CD4-positive, alpha-beta T cell (primary cell): ENCODE measurements at regions of chr6 and their contacts with region 1.

Region 1: DNA sequence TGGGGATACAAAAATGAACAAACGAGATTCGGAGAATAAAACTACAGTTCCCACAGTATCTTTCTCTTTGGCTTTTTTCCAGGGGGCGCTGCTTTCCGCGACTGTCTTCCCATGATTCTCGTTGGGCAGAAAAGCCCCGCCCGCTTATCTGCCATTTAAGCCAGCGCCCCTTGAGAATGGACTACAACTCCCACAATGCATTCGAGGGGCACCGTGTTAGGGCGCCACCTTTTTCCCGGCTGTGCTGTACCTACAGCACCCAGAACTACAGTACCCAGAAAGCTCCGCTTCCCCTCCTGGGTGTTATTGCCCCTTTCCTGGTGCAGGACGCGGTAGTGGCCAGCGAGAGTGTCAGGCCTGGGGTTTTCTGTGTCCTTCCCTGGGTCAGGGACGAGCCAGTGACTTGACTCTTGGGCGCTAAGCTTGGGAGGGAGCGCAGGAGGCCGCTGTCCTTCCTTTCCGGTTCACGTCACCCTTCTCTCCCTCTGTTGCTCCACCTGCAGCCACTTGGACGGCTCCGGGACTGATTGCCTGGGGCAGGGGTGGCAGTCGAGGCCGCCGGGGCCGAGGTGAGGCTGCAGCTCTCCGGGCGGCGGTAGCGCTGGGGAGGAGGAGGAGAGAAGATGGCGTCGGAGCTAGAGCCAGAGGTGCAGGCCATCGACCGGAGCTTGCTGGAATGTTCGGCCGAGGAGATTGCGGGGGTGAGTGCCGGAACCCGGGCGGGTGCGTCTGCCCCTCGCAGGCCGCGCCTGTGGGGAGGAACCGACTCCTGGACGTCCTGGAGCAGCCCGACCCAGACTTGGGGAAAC is at the start of gene UBR2:
- DNase-seq: peak; percentile 81 to 98 (median 90)
- ATAC-seq: peak; percentile 95
- H3K4me3 ChIP-seq: peak within 1 kb of the TSS; percentile 99
- H3K4me3 Mint-ChIP-seq: peak within 1 kb of the TSS; percentile 98
- H3K27ac ChIP-seq: peak within 1 kb of the TSS; percentile 87 to 93
- H3K27ac Mint-ChIP-seq: peak within 1 kb of the TSS; percentile 98
- H3K4me1 ChIP-seq: peaks cover 16% of the 10 kb centered on the region
- H3K4me1 Mint-ChIP-seq: peaks cover 38% of the 10 kb centered on the region
- H3K27me3 ChIP-seq: no peaks in the 10 kb centered on the region
- H3K27me3 Mint-ChIP-seq: no peaks in the 10 kb centered on the region
- CTCF ChIP-seq: peak; percentile 52
- total RNA-seq, gene UBR2: 27.4 to 27.7 TPM

Region 2: DNA sequence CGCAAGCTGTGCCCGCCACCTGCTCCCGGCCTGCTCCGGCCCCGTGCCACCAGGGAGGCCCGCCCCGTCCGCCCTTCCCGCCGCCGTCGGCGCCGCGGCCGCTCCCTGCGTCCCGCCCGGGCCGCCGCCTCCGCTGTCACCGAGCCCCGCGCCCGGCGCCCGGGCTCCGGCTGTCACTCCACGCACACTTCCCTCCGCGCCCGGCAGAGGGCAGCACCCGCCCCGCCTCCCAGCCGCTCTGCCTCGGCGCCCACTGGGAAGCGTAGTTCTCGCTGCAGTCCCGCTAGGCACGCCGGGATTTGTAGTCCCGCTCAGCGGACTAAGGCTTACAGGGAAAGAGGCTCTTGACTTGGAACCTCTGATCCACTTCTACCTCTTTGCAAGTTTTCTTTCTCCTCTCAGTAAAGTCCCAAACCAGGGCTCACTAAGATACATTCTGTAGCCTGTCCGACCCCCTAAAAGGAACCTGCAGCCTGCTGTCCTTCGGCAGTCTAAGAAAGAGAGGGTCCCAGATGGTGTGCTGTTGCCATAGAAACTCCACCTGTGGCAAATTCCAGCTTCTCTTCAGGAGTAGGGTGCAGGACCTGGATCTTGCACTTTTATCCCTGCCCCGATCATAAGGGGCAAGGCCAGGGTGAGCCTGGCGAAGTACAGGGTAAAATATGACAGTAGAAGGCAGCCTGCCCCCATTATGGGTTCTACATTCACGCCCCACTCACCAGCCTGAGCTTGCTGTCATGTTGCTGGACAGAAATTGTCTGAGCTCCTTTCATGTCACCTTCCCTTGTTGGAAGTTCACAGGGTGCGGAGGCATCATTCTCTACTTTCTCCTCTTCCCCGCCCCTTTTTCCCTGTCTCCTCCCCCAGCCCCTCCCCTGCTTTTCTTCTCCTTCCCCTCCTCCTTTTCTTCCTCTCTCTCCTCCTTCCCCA is 828.2 kb before region 1 on chr6 and contains the start of gene TFEB:
- CTCF ChIA-PET with region 1: no interaction called
- POLR2A ChIA-PET with region 1: interaction called, 3 read pairs
- intact Hi-C with region 1: loop called in 1 of 2 experiments (anchors 2 kb)
- DNase-seq: peak; percentile 89 to 96 (median 93)
- ATAC-seq: peak; percentile 70
- H3K4me3 ChIP-seq: peak within 1 kb of the TSS; percentile 73
- H3K4me3 Mint-ChIP-seq: peak within 1 kb of the TSS; percentile 97
- H3K27ac ChIP-seq: peak within 1 kb of the TSS; percentile 77 to 80
- H3K27ac Mint-ChIP-seq: peak within 1 kb of the TSS; percentile 88
- H3K4me1 ChIP-seq: peaks cover 37% of the 10 kb centered on the region
- H3K4me1 Mint-ChIP-seq: peaks cover 33% of the 10 kb centered on the region
- H3K27me3 ChIP-seq: peaks cover 0 to 3% of the 10 kb centered on the region in 2 experiments
- H3K27me3 Mint-ChIP-seq: no peaks in the 10 kb centered on the region
- CTCF ChIP-seq: peak; percentile 73
- total RNA-seq, gene TFEB: 23.8 to 24.1 TPM

Region 3: DNA sequence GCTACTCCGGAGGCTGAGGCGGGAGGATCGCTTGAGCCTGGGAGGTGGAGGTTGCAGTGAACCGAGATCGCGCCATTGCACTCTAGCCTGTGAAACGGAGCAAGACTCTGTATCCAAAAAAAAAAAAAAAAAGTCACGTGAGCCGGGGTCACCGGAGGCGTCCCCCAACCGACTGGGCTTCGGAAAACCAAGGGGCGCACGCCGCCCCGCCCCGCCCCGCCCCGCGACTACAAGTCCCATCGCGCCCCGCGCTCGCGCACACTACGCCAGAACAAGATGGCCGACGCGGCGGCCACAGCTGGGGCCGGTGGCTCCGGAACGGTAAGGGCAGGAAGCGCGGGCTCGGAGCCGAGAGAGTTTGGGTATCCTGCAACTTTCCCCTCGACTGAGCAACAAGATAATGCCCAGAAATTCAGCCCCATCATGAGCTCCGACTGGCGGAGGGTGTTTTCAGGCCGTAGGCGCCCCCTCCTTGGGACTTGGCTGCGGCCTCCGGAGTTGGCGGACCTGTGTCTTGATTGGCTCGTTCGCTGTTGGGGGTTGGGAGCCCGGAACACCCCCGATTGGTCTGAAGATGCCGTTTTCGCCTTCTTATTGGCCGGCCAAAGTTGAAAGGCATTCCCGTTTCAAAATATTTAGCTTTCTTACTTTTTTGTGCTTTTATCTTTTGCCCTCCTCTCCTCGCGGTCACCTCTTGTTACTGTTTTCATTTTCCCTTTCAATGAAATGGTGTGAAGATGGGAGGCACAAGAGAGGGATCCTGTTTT is 513.5 kb before region 1 on chr6 and contains the start of gene TAF8:
- CTCF ChIA-PET with region 1: no interaction called
- POLR2A ChIA-PET with region 1: interaction called, 16 read pairs
- intact Hi-C with region 1: loop called in 1 of 2 experiments (anchors 2 kb)
- DNase-seq: peak; percentile 78 to 95 (median 84)
- ATAC-seq: peak; percentile 53
- H3K4me3 ChIP-seq: peak within 1 kb of the TSS; percentile 85
- H3K4me3 Mint-ChIP-seq: peak within 1 kb of the TSS; percentile 96
- H3K27ac ChIP-seq: peak within 1 kb of the TSS; percentile 85 to 89
- H3K27ac Mint-ChIP-seq: peak within 1 kb of the TSS; percentile 89
- H3K4me1 ChIP-seq: peaks cover 61% of the 10 kb centered on the region
- H3K4me1 Mint-ChIP-seq: peaks cover 72% of the 10 kb centered on the region
- H3K27me3 ChIP-seq: no peaks in the 10 kb centered on the region
- H3K27me3 Mint-ChIP-seq: no peaks in the 10 kb centered on the region
- CTCF ChIP-seq: no peak
- total RNA-seq, gene TAF8: 30.1 to 34.7 TPM

Region 4: DNA sequence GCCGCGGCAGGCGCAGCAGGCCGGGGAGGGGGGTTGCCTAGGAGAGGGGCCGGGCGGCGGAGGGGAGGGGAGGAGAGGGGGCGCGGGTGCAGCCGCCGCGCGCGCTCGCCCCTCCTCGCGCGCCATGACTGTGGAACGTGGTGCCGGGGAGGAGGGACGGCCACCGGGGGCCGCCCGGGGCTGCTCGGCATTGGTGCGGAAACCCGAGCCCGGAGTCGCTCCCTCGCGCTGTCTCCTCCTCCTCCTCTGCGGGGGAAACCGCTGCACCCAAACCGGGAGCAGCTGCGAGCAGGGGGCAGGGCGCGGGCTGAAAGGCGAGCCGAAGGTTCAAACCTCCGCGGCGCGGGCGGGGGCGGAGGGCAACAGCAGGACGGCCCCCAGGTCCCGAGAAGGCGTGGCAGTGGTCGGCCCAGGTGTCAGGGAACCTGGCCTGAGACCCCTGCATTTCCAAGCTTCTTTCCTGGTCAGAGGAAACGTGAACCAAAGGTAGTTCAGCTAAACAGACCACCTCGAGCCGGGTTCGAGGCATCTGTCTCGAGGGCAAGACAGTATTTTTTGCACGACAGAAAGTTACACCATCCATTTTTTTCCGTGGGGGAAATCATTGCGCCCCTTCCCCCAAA is 110.8 kb before region 1 on chr6:
- CTCF ChIA-PET with region 1: no interaction called
- POLR2A ChIA-PET with region 1: interaction called, 29 read pairs
- intact Hi-C with region 1: no loop called
- DNase-seq: peak; percentile 57 to 90 (median 75)
- ATAC-seq: peak; percentile 72
- H3K4me3 ChIP-seq: peak overlapping the region; percentile 96
- H3K4me3 Mint-ChIP-seq: peak overlapping the region; percentile 98
- H3K27ac ChIP-seq: peak overlapping the region in 1 of 2 donors; percentile 64
- H3K27ac Mint-ChIP-seq: peak overlapping the region; percentile 86
- H3K4me1 ChIP-seq: peaks cover 36% of the 10 kb centered on the region
- H3K4me1 Mint-ChIP-seq: peaks cover 51% of the 10 kb centered on the region
- H3K27me3 ChIP-seq: no peaks in the 10 kb centered on the region
- H3K27me3 Mint-ChIP-seq: no peaks in the 10 kb centered on the region
- CTCF ChIP-seq: no peak

Region 5: DNA sequence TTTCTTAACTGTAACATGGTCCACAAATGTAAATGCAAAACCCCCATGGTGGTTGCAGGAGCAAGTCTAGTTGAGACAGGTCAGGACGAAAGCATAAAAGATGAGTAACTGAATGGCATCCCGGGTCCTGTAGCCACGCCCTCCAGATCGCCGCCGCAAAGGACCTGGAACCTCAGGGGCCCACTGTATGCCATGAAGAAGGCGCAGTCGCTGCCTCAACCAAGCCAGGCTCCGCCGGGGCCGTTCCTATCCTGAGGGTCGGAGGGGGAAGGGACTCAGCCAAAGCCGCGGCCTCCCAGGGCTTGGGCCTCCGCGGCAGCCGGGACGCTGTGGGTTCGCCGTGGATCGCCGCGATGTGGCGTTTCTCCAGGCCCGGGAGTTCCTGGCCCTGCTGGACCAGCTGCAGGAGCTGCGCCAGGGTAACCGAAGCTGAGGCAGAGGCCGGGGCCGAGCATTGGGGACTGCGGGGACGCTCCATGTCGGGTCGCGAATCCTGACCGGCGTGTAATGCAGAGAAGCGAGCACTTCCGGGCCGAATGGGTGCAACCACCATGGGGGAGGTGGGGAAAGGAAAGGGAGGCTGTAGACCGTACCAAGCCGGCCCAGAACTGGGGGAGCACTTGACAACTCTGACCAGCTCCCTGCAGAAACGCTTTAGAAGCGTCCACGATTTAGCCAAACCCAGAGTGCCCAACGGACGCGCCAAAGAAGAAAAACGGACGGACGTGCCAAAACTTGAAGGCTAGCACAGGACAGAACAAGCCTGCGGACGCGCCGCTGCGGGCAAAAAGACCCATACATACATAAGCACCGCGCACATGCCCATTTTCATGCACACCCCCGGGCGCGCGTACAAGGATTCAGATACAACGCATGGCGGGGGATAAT is 326.7 kb after region 1 on chr6:
- CTCF ChIA-PET with region 1: no interaction called
- POLR2A ChIA-PET with region 1: interaction called, 3 read pairs
- intact Hi-C with region 1: loop called in 1 of 2 experiments (anchors 10 kb)
- DNase-seq: peak; percentile 77 to 93 (median 87)
- ATAC-seq: peak; percentile 93
- H3K4me3 ChIP-seq: peak overlapping the region; percentile 94
- H3K4me3 Mint-ChIP-seq: peak overlapping the region; percentile 91
- H3K27ac ChIP-seq: peak overlapping the region; percentile 86 to 89
- H3K27ac Mint-ChIP-seq: peak overlapping the region; percentile 94
- H3K4me1 ChIP-seq: peaks cover 17% of the 10 kb centered on the region
- H3K4me1 Mint-ChIP-seq: peaks cover 16% of the 10 kb centered on the region
- H3K27me3 ChIP-seq: no peaks in the 10 kb centered on the region
- H3K27me3 Mint-ChIP-seq: no peaks in the 10 kb centered on the region
- CTCF ChIP-seq: no peak

Region 6: DNA sequence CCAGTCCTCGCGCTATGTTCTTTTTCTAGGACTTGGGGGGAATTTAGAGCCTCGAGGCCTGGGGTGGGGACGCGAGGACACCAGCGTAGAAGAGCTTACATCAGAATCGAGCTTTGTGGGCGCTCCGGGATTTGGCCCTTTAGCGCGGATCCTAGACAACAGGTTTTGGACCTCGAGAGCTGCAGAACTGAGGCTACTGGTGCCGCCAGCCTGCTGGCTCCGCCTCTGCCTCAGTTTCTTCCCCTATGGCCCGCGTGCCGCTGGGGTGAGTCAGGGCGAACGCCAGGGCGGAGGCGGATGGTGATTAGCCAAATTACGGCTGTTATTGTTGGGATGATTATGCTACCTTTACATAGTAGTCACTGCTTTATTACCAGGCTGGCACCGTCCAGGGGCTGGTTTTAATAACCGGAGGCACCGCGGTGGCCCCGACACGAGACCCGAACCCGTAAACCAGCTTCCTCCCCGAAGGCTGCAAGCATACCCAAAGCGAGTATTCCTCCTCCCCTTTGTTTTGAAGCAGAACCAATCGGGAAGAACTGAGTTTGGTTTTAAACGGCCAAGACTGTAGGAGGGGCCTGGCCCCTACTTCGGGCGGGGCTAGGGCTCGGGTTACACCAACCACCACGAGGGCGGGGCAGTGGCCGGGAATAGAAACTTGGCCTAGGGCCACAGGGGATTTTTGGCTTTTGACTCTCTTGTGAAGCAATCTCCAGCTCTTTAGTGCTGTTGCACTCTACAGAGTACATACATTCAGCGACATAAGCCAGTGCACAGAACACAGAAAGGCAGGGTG is 1065.8 kb after region 1 on chr6:
- CTCF ChIA-PET with region 1: no interaction called
- POLR2A ChIA-PET with region 1: no interaction called
- intact Hi-C with region 1: loop called in 1 of 2 experiments (anchors 5 kb)
- DNase-seq: peak; percentile 65 to 96 (median 82)
- ATAC-seq: peak; percentile 58
- H3K4me3 ChIP-seq: peak overlapping the region; percentile 92
- H3K4me3 Mint-ChIP-seq: peak overlapping the region; percentile 98
- H3K27ac ChIP-seq: peak overlapping the region; percentile 86 to 90
- H3K27ac Mint-ChIP-seq: peak overlapping the region; percentile 94
- H3K4me1 ChIP-seq: peaks cover 40% of the 10 kb centered on the region
- H3K4me1 Mint-ChIP-seq: peaks cover 41% of the 10 kb centered on the region
- H3K27me3 ChIP-seq: no peaks in the 10 kb centered on the region
- H3K27me3 Mint-ChIP-seq: no peaks in the 10 kb centered on the region
- CTCF ChIP-seq: no peak